A549 (cell line): ENCODE measurements at regions of chr12 and their contacts with region 1.

Region 1: GRCh38 chr12:67355578-67356379 is 86.6 kb downstream of the CAND1 start:
- DNase-seq: peak in 1 of 2 experiments; percentile 54
- ATAC-seq: peak; percentile 39 to 73; a peak in 4 of 6 replicates
- H3K4me3 ChIP-seq: no peak overlapping the region
- H3K27ac ChIP-seq: no peak overlapping the region
- H3K4me1 ChIP-seq: no peaks in the 10 kb centered on the region
- CTCF ChIP-seq: peak; percentile 81
- EP300 ChIP-seq: no peak
- POLR2A ChIP-seq: no peak
- RAD21 ChIP-seq: peak; percentile 75 to 81

Region 2: DNA sequence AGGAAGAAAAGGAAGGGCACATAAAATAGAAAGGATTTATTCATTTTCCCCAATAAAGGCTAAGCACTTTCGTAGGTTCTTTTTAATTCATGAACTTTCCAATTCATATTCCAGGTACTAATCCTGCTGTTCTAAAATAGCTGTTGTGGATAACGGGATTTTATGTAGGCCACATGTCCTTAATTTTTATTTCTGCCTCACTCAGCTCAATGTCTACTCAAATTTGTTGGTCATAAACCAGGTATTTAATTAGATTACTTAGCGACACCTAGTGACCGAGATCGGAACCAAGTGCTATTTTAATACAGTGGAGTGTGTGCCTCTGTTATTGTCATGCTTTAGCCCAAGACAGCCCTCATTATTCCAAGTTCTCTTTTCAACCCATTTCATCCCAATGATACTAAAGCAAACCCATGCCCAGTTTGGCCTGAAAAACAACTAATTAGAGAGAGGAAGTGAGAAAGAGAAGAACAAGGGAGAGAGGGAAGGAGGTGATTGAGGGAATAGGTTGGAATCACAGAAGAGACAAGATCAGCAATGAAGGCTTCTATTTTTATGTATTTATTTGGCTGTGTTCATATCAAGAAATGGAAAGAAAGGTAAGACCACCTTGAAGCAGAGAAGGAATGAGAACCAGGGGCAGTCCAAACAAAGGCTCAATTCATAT is 587.6 kb after region 1 on chr12:
- CTCF ChIA-PET with region 1: interaction called, 17 read pairs
- POLR2A ChIA-PET with region 1: no interaction called
- DNase-seq: peak; percentile 51 to 67
- ATAC-seq: peak; percentile 71 to 92; a peak in 5 of 6 replicates
- H3K4me3 ChIP-seq: no peak overlapping the region
- H3K27ac ChIP-seq: no peak overlapping the region
- H3K4me1 ChIP-seq: peaks cover 12% of the 10 kb centered on the region; the same call in 2 of the 3 replicates
- CTCF ChIP-seq: peak; percentile 85
- EP300 ChIP-seq: no peak
- POLR2A ChIP-seq: no peak
- RAD21 ChIP-seq: peak; percentile 87 to 88